ENCODE measurements at regions of chr5 and their contacts with region 1.

Region 1: DNA sequence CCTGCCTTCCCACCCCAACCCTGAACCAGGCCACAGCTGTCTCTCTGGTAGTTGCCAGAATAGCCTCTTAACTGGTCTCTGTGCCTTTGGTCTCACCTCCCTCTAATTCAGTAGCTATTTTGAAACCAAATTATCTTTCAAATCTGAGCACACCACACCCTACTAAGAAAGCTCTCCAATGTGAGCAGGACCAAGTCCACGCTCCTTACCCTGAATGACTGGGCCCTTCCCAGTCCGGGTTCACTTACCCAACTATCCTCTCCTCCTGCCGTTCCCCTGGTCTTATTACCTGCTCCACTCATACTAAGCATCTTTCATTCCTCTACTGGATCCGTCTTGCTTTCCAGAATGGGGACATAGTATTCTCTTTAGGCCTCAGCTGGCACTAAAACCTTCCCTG is 16.8 kb downstream of the ANKH start:
- DNase-seq: no peak
- ATAC-seq: no peak
- H3K4me3 Mint-ChIP-seq: no peak overlapping the region
- H3K27ac Mint-ChIP-seq: no peak overlapping the region
- H3K4me1 Mint-ChIP-seq: no peaks in the 10 kb centered on the region
- H3K27me3 Mint-ChIP-seq: no peaks in the 10 kb centered on the region

Region 2: DNA sequence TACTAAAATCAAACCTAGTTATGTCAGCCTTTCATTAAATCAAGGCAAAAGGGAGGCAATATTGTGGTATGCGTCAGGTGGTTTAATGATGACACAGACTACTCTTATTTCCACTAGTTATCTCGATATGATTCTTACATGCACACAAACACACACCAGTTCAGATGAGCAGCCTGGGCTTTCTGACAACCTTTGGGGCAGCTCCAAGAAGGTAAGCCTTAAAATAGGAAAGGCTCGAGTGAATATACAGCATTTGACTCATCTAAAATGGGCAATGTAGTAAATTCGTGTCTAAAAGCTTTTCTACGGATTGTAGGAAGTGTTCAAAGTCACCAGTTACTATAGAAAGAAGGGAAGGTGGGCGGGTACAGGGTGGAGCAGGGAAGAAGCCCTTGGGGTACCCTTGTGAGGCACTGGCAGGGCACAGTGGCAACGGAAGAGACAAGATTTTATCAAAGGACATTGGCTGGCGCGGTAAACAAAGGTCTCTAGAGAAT is 14.9 kb after region 1 on chr5:
- POLR2A ChIA-PET with region 1: no interaction called
- DNase-seq: no peak
- ATAC-seq: no peak
- H3K4me3 Mint-ChIP-seq: peak overlapping the region; percentile 86
- H3K27ac Mint-ChIP-seq: peak overlapping the region; percentile 18
- H3K4me1 Mint-ChIP-seq: peaks cover 25% of the 10 kb centered on the region
- H3K27me3 Mint-ChIP-seq: peaks cover 4% of the 10 kb centered on the region

Region 3: GRCh38 chr5:14890846-14891245 is 36.0 kb after region 1 on chr5:
- POLR2A ChIA-PET with region 1: interaction called, 10 read pairs
- DNase-seq: no peak
- ATAC-seq: no peak
- H3K4me3 Mint-ChIP-seq: no peak overlapping the region
- H3K27ac Mint-ChIP-seq: no peak overlapping the region
- H3K4me1 Mint-ChIP-seq: no peaks in the 10 kb centered on the region
- H3K27me3 Mint-ChIP-seq: peaks cover 6% of the 10 kb centered on the region

Region 4: DNA sequence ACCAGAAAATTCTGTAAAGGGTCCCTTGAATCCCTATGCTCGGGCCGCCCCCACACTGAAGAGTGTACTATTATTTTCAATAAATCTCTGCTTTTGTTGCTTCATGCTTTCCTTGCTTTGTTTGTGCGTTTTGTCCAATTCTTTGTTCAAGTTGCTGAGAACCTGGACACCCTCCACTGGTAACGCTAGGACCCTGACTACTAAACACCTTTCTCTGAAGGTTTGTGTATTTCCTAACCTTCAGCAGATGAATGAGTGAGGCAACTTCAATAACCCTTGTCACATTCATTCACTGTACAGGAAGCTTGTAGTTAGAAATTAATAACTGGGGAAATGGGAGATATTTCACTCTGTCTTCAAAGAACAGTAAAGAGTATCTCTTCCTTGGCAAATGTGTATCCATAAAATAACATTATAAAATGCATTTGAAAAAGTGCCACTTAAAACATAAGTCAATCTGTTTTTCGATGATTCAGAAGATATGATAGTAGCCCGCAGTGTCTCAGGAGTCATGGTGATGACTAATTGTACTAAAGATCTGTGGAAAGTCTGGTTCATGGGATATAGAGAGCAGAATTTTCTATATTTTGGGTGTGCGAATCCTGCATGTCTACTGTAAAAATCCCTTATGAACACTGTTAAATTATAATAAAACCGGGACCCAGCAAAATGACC is 59.9 kb after region 1 on chr5:
- POLR2A ChIA-PET with region 1: no interaction called
- DNase-seq: no peak
- ATAC-seq: no peak
- H3K4me3 Mint-ChIP-seq: no peak overlapping the region
- H3K27ac Mint-ChIP-seq: no peak overlapping the region
- H3K4me1 Mint-ChIP-seq: peaks cover 2% of the 10 kb centered on the region
- H3K27me3 Mint-ChIP-seq: peaks cover 7% of the 10 kb centered on the region

Region 5: GRCh38 chr5:14925326-14925725 is 70.5 kb after region 1 on chr5:
- POLR2A ChIA-PET with region 1: no interaction called
- DNase-seq: no peak
- ATAC-seq: no peak
- H3K4me3 Mint-ChIP-seq: peak overlapping the region; percentile 44
- H3K27ac Mint-ChIP-seq: peak overlapping the region; percentile 24
- H3K4me1 Mint-ChIP-seq: peaks cover 20% of the 10 kb centered on the region
- H3K27me3 Mint-ChIP-seq: peaks cover 2% of the 10 kb centered on the region

Region 6: GRCh38 chr5:14937254-14937653 is 82.5 kb after region 1 on chr5:
- POLR2A ChIA-PET with region 1: no interaction called
- DNase-seq: no peak
- ATAC-seq: no peak
- H3K4me3 Mint-ChIP-seq: no peak overlapping the region
- H3K27ac Mint-ChIP-seq: no peak overlapping the region
- H3K4me1 Mint-ChIP-seq: peaks cover 1% of the 10 kb centered on the region
- H3K27me3 Mint-ChIP-seq: peaks cover 16% of the 10 kb centered on the region

Measured in activated naive CD8-positive, alpha-beta T cell treated with anti-CD3 and anti-CD28 coated beads, Interleukin-2, amount 10 ng/mL, durations not matched to agents 7 days and 5 days (primary cell).